Endothelial cell of umbilical vein (primary cell): ENCODE measurements at regions of chrX and their contacts with region 1.

Region 1: GRCh38 chrX:154727871-154728270 is 23.0 kb downstream of the GAB3 start:
- DNase-seq: peak; percentile 86
- H3K4me3 ChIP-seq: peak overlapping the region in 1 of 3 experiments; percentile 12
- H3K27ac ChIP-seq: peak overlapping the region; percentile 95
- H3K4me1 ChIP-seq: peaks cover 73% of the 10 kb centered on the region
- H3K27me3 ChIP-seq: no peaks in the 10 kb centered on the region
- CTCF ChIP-seq: no peak
- POLR2A ChIP-seq: peak; percentile 24

Region 2: GRCh38 chrX:154443992-154444754 is 283.7 kb before region 1 on chrX and contains the start of gene FAM50A:
- CTCF ChIA-PET with region 1: no interaction called
- POLR2A ChIA-PET with region 1: no interaction called
- dilution Hi-C with region 1: no loop called
- intact Hi-C with region 1: no loop called
- DNase-seq: peak; percentile 40
- H3K4me3 ChIP-seq: peak within 1 kb of the TSS; percentile 35 to 69 (median 50)
- H3K27ac ChIP-seq: peak within 1 kb of the TSS; percentile 63
- H3K4me1 ChIP-seq: peaks cover 8% of the 10 kb centered on the region
- H3K27me3 ChIP-seq: no peaks in the 10 kb centered on the region
- CTCF ChIP-seq: no peak
- POLR2A ChIP-seq: no peak
- total RNA-seq, gene FAM50A: 111 and 123 TPM in 2 replicates

Region 3: DNA sequence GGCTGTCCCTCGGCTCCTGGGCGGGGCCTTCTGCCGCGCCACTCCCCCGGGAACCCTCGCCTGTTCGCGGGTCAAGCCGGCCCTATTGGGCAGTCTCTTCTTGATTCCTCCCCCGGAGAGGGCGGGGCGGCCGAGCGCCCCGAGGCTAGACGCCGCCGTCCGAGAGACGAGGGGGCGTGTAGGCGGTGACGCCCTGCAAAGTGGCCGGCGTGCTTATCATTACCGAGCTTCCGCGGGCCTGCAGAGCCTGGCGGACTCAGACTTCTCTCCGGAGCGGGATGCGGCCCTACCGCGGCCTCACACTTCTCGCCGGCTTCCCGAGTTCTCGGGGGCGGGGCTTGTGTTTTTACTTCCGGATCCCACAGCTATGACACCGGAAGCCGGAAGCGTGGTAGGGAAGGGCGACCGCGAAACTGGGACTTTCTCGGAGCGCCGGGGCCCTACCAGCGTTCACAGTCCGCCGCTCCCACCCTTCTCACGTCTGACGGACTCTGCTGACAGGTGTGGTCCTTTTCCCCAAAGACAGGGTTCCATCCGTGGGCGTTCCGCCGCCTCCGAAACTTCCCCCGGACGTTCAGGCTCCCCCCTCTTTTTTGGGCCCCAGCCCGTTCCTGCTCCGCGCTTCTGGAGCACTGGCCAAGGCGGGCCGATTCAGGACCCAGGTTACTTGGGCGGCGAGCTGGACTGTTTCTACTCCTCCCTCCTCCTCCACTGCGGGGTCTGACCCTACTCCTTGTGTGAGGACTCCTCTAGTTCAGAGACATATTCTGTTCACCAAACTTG is 180.4 kb before region 1 on chrX and contains the start of gene IKBKG:
- CTCF ChIA-PET with region 1: no interaction called
- POLR2A ChIA-PET with region 1: no interaction called
- dilution Hi-C with region 1: no loop called
- intact Hi-C with region 1: no loop called
- DNase-seq: peak; percentile 91
- H3K4me3 ChIP-seq: peak within 1 kb of the TSS; percentile 66 to 92 (median 68)
- H3K27ac ChIP-seq: peak within 1 kb of the TSS; percentile 85
- H3K4me1 ChIP-seq: peaks cover 17% of the 10 kb centered on the region
- H3K27me3 ChIP-seq: no peaks in the 10 kb centered on the region
- CTCF ChIP-seq: no peak
- POLR2A ChIP-seq: no peak
- total RNA-seq, gene IKBKG: 40.3 and 41.2 TPM in 2 replicates

Region 4: DNA sequence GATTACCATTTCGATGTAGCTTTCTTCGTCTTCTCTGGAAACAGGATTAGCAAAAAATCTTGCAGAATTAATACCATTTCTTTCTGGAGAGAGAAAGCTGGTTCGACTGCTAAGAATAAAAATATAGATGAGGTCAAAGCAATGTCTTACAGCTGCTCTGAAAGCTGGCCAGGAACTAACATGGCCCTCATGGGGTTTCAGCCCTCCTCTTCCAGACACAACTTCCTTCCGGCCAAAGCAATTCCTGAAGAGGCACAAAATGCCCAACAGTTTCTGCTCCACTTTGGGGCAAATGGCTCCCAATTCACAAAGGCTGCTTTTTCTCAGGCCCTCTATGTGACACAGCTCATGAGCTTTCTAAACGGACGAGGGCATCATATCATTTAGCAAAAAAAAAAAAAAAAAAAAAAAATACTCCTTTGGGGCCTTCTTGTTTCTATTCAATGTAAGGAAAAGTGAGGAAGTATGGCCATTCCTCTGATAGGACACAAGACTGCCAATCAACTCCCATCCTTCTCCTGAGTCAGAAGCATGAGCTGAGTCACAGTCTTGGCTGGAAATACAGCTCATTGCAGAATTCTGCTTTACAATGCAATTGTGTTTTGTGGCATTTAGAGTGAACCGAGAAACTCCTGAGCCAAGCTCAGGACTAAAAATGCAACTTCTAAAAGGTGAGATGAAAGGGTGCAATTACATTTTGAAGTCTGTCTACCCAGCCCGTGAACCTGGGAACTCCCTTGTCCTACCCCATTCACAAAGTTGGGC is 31.8 kb before region 1 on chrX:
- CTCF ChIA-PET with region 1: no interaction called
- POLR2A ChIA-PET with region 1: no interaction called
- dilution Hi-C with region 1: no loop called
- intact Hi-C with region 1: no loop called
- DNase-seq: peak; percentile 3
- H3K4me3 ChIP-seq: no peak overlapping the region
- H3K27ac ChIP-seq: no peak overlapping the region
- H3K4me1 ChIP-seq: peaks cover 3% of the 10 kb centered on the region
- H3K27me3 ChIP-seq: no peaks in the 10 kb centered on the region
- CTCF ChIP-seq: no peak
- POLR2A ChIP-seq: no peak

Region 5: DNA sequence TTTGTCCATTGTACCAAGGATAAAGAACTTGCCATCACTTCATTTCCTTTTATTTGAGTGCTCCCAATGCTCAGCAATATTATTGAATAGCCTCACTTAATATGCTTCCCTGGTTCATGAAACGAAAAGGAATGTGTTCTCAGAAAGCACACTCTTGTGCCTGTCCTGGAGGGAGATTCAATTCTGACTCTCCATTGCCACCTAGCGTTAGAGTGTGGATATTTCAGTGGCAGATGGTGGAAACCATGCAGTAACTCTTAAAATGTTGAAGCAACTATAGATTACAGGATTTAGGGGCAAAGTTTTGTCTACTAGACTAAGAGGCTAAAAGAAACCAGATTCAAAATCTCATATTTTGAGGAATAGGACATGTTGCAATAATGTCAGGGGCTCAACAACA is 12.9 kb before region 1 on chrX:
- CTCF ChIA-PET with region 1: interaction called, 6 read pairs
- POLR2A ChIA-PET with region 1: no interaction called
- dilution Hi-C with region 1: no loop called
- intact Hi-C with region 1: loop called (anchors 1 kb)
- DNase-seq: peak; percentile 62
- H3K4me3 ChIP-seq: no peak overlapping the region
- H3K27ac ChIP-seq: no peak overlapping the region
- H3K4me1 ChIP-seq: peaks cover 40% of the 10 kb centered on the region
- H3K27me3 ChIP-seq: no peaks in the 10 kb centered on the region
- CTCF ChIP-seq: peak; percentile 43 to 52
- POLR2A ChIP-seq: no peak